ENCODE measurements at regions of chr11 and their contacts with region 1.

Region 1: GRCh38 chr11:46936138-46937110 is at the start of gene CSTPP1:
- DNase-seq: peak; percentile 80 to 92 (median 89)
- ATAC-seq: peak; percentile 99
- H3K4me3 ChIP-seq: peak within 1 kb of the TSS; percentile 76
- H3K4me3 Mint-ChIP-seq: peak within 1 kb of the TSS; percentile 86 to 100 (median 92)
- H3K27ac ChIP-seq: peak within 1 kb of the TSS; percentile 72
- H3K27ac Mint-ChIP-seq: peak within 1 kb of the TSS; percentile 89 to 98 (median 92)
- H3K4me1 ChIP-seq: peaks cover 0 to 11% of the 10 kb centered on the region in 2 donors
- H3K4me1 Mint-ChIP-seq: peaks cover 5 to 24% (median 21%) of the 10 kb centered on the region in 7 donors
- H3K27me3 ChIP-seq: no peaks in the 10 kb centered on the region
- H3K27me3 Mint-ChIP-seq: peaks cover 8 to 19% (median 9%) of the 10 kb centered on the region in 5 donors
- total RNA-seq, gene CSTPP1: 9.3 to 18.6 (median 16.1) TPM

Region 2: DNA sequence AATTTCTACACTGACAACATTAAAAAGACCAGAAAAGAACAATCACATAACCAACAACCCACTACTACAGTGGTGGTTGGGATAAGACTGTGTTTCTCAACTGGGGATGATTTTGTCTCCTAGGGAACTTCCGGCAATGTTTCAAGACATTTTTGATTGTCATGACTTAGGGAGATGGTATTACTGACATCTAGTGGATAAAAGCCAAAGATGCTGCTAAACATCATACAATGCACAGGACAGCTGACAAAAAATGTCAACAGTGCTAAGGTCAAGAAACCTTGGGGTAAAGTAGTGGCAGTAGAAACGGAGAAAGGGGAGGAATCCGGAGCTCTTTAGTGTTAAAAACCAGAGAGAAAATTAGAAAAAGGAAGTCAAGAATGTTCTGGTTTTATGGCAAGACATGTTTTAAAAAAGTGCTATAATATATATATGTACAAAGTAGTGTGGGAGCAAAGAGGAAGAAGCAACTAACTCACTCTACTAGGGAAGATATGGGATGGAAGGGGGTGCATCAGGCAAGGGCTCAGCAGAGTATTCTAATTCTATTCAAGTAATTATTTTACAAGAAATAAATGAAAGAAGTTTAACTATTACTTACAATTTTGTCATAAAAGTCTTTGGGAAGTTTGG is 127.5 kb before region 1 on chr11:
- CTCF ChIA-PET with region 1: no interaction called
- POLR2A ChIA-PET with region 1: no interaction called
- intact Hi-C with region 1: no loop called
- DNase-seq: peak in 3 of 9 donors; percentile 6 to 14 (median 12)
- ATAC-seq: peak; percentile 68
- H3K4me3 ChIP-seq: no peak overlapping the region
- H3K4me3 Mint-ChIP-seq: no peak overlapping the region
- H3K27ac ChIP-seq: no peak overlapping the region
- H3K27ac Mint-ChIP-seq: peak overlapping the region in 2 of 9 donors; percentile 65 to 66
- H3K4me1 ChIP-seq: no peaks in the 10 kb centered on the region
- H3K4me1 Mint-ChIP-seq: peaks cover 0 to 15% (median 5%) of the 10 kb centered on the region in 7 donors
- H3K27me3 ChIP-seq: no peaks in the 10 kb centered on the region
- H3K27me3 Mint-ChIP-seq: no peaks in the 10 kb centered on the region

Region 3: DNA sequence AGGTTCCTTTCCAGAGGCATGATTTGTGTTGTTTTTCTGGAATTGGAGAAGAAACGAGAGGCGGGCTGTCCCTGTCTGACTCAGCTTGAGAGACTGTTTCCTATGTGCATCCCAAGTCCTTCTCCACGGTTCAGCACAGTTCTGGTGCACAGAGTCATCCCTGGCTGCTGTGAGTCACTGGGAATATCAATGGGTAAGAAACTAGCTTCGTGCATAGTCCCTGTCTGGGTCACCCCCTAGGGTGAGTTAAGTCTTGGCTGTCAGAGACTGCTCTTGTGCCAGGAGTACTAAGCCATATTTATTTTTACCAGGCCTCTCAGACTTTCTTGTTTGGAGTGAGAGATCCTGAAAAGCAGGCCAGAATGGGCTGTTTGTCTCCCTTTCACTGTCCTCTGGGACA is 15.7 kb before region 1 on chr11:
- CTCF ChIA-PET with region 1: interaction called, 3 read pairs
- POLR2A ChIA-PET with region 1: interaction called, 3 read pairs
- intact Hi-C with region 1: loop called in 1 of 2 experiments (anchors 1 kb)
- DNase-seq: no peak
- ATAC-seq: no peak
- H3K4me3 ChIP-seq: no peak overlapping the region
- H3K4me3 Mint-ChIP-seq: no peak overlapping the region
- H3K27ac ChIP-seq: no peak overlapping the region
- H3K27ac Mint-ChIP-seq: no peak overlapping the region
- H3K4me1 ChIP-seq: peaks cover 13% of the 10 kb centered on the region in 2 donors
- H3K4me1 Mint-ChIP-seq: peaks cover 20 to 31% (median 25%) of the 10 kb centered on the region in 7 donors
- H3K27me3 ChIP-seq: peaks cover 4 to 18% of the 10 kb centered on the region in 2 donors
- H3K27me3 Mint-ChIP-seq: peaks cover 30 to 49% (median 36%) of the 10 kb centered on the region in 5 donors

Measured in naive thymus-derived CD4-positive, alpha-beta T cell (primary cell).